Vagina (tissue), 2 donors: ENCODE measurements at regions of chr3 and their contacts with region 1.

Region 1: DNA sequence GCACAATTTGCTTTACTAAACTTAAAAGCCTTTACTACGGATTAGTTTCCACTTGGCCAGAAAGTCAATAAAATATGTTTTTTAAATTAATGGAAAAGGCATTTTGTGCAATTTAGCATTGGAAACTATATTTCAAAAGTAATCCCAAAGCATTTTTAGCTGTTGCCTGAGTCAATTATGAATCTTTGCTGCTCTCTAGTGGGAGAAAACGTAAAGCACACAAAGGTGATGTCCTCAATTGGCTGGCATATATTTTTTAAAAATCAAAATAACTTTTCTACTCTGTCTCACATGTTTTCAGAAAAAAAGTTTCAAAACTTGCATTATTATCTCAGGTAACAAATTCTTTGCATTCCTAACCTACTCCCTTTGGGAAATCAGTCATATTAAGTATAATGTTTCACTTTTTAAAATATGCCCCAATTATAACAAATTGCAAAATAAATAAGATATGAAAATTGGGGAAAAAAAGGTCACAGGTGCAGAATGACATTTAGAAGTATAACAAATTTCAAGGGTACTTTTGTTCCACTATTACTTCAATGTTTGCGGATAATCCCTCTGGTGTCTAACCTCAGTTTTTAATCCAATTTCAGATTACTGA is 47.2 kb upstream of the TEX55 start:
- DNase-seq: no peak
- H3K4me3 ChIP-seq: no peak overlapping the region
- H3K27ac ChIP-seq: no peak overlapping the region
- H3K4me1 ChIP-seq: no peaks in the 10 kb centered on the region
- H3K27me3 ChIP-seq: no peaks in the 10 kb centered on the region
- CTCF ChIP-seq: peak in 2 of 3 experiments; percentile 31 to 41
- POLR2A ChIP-seq: no peak

Region 2: DNA sequence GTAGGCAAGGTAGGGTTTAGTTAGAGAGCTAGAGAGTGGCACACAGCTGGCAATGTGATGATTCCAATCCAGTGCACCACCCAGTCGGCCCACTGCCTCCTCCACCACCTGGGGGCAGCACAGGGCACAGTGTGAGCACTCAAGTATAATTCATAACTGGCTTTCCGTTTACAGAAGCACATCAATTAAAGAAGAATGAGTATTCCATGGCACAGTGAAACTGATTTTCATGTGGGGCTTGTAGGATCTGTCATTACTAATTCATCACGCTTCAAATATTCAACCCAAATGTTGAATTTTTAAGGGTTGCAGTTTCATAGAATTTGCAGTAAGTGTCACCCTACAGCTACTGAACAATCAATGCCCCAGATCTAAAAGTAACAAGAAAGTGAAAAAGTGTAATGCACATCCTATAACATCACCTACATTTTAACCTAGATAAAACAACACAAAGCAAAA is 213.9 kb before region 1 on chr3:
- intact Hi-C with region 1: loop called (anchors 5 kb)
- DNase-seq: no peak
- H3K4me3 ChIP-seq: no peak overlapping the region
- H3K27ac ChIP-seq: no peak overlapping the region
- H3K4me1 ChIP-seq: no peaks in the 10 kb centered on the region
- H3K27me3 ChIP-seq: no peaks in the 10 kb centered on the region
- CTCF ChIP-seq: peak; percentile 15 to 58 (median 49)
- POLR2A ChIP-seq: no peak